Left colon (tissue), 2 donors: ENCODE measurements at regions of chr16 and their contacts with region 1.

Region 1: DNA sequence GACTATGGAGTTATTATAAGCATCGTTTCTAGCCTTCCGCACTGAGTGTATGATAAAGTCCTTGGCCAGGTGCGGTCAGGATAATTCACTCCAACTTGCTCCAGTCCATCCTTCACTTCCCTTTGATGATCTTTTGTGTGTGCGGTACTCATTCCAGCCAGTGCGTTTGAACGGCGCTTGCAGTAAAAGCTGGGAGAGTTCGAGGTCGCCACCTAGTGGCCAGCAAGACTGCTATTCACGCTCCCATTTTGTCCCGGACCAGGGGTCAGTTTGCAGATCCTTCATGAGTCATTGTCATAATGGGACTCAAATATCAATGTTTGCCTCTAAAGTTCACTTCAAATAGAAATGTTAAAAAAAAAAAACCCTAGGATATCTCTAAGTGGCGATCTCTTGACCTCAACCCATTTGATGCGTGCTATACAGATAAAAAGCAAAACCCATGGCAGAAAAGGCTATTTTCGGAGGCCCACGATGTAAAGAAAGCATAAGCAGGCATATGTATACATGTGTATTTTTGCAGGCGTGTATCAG is 417.1 kb downstream of the TMEM114 start:
- DNase-seq: peak; percentile 58 to 75
- ATAC-seq: peak; percentile 96

Region 2: GRCh38 chr16:6682142-6682811 is 1490.9 kb before region 1 on chr16:
- intact Hi-C with region 1: loop called in 1 of 2 experiments (anchors 10 kb)
- DNase-seq: peak in 1 of 2 donors; percentile 43
- ATAC-seq: peak; percentile 66

Region 3: DNA sequence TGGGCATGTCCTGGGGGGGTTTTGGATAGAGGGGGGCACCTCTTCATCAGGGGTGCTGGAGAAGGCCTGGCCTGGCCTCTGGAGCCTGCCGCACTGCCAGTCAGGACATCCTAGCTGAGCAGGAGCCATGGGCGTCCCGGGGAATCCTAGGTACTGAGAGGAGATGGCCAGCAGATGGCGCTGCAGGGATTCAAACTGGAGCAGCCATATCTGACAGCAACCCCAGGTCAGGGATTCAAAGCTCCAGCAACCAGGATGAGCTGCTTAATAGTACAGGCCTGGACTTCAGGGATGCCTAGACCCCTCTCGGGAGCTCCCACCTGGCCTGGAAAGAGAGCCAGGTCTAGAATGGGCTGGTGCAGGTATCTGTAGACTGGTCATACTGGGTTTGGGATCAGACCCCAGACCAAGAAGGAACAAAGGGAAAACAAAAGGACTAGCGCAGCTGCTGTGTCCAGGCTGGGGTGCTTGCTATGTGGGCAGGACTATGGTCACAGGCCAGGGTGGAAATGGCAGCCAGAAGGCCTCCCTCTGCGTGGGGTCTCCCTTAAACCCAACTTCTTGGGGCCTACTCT is 1147.5 kb before region 1 on chr16:
- intact Hi-C with region 1: loop called in 1 of 2 experiments (anchors 5 kb)
- DNase-seq: peak; percentile 36 to 79
- ATAC-seq: peak; percentile 74

Region 4: GRCh38 chr16:8271344-8271743 is 98.2 kb after region 1 on chr16:
- intact Hi-C with region 1: no loop called
- DNase-seq: no peak
- ATAC-seq: no peak